ENCODE measurements at regions of chr19 and their contacts with region 1.

Region 1: DNA sequence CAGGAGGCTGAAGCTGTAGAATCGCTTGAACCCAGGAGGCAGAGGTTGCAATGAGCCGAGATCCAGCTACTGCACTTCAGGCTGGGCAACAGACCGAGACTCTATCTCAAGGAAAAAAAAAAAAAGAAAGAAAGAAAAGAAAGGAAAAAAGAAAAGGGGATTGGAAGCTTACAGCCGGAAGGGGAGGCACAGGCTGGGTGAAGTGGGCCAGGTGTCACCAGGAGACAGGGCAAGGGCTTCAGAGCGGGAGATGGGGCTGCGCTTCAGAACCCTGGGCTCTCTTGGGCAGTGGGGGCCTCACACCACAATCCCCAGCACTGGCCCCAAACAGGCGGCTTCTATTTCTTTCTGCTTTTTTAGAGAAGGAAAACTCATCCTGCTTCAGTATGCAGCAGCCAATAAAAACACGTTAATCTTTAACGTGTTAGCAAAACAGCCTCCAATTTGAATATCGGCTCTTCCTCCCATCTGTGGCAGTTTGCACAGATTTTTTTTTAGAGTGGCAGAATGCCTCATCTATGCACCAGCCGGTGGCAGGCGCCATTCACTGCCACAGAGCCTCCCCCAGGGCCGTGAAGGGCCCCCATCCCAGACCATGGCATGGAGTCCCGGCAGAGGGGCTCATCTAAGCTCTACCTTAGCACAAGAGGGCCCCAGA is 46.6 kb upstream of the C19orf12 start:
- DNase-seq: no peak
- CTCF ChIP-seq: no peak

Region 2: GRCh38 chr19:29714953-29715700 is 46.6 kb before region 1 on chr19 and contains the start of gene C19orf12:
- CTCF ChIA-PET with region 1: interaction called, 12 read pairs
- POLR2A ChIA-PET with region 1: no interaction called
- DNase-seq: peak; percentile 81
- CTCF ChIP-seq: no peak

Region 3: GRCh38 chr19:29771708-29772414 is 10.2 kb after region 1 on chr19:
- CTCF ChIA-PET with region 1: interaction called, 28 read pairs
- POLR2A ChIA-PET with region 1: no interaction called
- DNase-seq: peak; percentile 57
- CTCF ChIP-seq: peak; percentile 55

Region 4: DNA sequence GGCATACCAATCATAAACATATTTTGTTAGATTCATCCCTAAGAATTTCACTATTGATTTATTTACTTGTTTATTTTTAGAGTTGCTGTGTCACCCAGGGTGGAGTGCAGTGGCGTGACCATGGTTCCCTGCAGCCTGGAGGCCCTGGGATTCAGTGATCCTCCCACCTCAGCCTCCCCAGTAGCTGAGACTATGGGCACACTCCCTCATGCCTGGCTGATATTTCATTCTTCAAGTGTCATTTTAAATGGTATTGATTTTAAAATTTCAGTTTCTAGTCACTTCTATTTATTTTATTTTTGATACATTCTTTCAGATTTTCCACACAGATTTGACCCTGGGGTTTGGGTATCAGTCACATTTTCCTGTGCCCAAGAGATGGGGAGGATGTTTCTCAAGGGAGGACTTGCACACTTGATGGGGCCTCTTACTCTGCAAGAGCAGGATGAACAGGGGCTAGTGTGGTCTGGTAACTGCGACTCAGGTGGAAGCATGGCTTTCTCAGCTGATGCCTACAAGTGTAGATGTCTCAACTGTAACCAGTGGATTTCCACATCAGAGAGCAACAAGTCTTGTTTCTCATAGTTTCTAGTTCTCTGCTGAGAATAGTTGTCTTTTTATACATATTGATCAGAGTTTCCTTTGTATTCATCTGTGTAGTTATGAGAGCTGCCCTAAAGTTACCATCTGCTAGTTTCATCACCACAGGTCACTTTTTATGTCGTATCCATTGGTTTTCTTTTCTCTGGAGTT is 90.2 kb after region 1 on chr19:
- CTCF ChIA-PET with region 1: interaction called, 11 read pairs
- POLR2A ChIA-PET with region 1: no interaction called
- DNase-seq: no peak
- CTCF ChIP-seq: no peak

Region 5: GRCh38 chr19:29881386-29881785 is 119.7 kb after region 1 on chr19:
- CTCF ChIA-PET with region 1: interaction called, 53 read pairs
- POLR2A ChIA-PET with region 1: no interaction called
- DNase-seq: no peak
- CTCF ChIP-seq: no peak